ENCODE measurements at regions of chr20 and their contacts with region 1.

Region 1: DNA sequence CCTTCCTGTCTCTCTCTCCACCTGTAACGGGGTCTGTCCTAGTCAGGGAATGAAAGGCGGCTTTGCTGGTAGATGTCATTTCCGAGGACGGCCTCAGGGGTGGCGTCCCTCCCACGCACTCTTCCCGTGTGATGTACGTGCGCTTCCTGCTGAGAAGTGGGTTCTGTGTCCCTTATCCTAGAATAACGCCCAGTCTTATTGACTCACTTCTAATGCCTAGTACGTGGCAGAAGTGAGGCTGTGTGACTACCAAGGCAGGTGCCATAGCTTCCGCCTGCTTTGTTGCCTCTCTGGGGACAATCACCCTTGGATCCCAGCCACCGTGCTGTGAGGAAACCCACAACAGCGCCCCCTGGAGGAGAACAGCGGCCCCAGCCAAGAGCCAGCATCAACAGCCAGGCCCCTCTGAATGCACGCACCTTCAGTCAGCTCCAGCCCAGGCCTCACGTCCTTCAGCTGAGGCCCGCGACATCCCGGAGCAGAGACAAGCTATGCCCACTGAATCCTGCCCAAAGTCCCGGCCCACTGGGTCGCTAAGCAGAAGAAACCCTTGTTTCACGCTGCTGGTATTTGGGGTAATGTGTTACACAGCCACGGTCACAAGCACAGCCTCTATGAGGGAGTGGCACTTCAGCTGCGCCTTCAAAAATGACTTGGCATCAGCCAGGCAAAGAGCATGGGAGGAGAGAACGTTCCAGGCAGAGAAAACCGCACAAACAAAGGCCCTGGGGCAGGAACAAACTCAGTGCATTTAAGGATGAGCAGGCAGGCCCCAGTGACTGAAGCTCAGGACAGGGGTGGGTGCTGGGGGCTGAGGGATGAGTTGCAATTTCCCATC is 224.2 kb downstream of the NFATC2 start:
- DNase-seq: peak in 1 of 5 donors; percentile 12
- ATAC-seq: peak in 1 of 4 donors; percentile 29
- H3K4me3 ChIP-seq: no peak overlapping the region
- H3K27ac ChIP-seq: no peak overlapping the region
- H3K4me1 ChIP-seq: no peaks in the 10 kb centered on the region
- H3K27me3 ChIP-seq: peaks cover 0 to 3% (median 0%) of the 10 kb centered on the region in 9 donors
- CTCF ChIP-seq: peak in 11 of 12 donors; percentile 15 to 49 (median 33)
- POLR2A ChIP-seq: no peak

Region 2: DNA sequence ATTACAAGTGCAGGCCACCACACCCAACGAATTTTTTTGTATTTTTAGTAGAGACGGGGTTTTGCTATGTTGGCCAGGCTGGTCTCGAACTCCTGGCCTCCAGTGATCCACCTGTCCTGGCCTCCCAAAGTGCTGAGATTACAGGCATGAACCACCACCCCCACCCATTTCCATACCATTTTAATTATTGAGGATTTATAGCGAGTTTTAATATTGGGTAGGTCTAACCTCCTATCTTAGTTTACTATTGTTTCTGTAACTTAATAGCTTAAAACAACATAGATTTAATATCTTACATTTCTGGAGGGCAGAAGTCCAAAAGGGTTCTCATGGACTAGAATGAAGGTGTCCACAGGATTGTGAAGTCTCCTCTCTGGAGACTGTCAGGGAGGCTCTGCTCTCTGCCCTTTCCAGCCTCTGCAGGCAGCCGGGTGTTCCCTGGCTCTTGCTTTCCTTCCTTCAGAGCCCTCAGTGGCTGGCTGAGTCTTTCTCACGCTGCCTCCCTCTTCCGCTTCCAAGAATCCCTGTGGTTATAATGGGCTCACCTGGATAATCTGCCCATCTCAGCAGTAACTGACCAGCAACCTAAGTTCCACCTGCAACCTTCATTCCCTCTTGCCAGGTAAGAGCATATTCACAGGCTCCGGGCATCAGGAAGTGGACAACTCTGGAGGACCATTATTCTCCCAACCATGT is 542.0 kb before region 1 on chr20:
- intact Hi-C with region 1: no loop called
- DNase-seq: peak in 1 of 5 donors; percentile 2
- ATAC-seq: no peak
- H3K4me3 ChIP-seq: no peak overlapping the region
- H3K27ac ChIP-seq: no peak overlapping the region
- H3K4me1 ChIP-seq: no peaks in the 10 kb centered on the region
- H3K27me3 ChIP-seq: peaks cover 0 to 4% (median 0%) of the 10 kb centered on the region in 9 donors
- CTCF ChIP-seq: no peak
- POLR2A ChIP-seq: no peak

Region 3: GRCh38 chr20:50799890-50800655 is 518.2 kb before region 1 on chr20:
- intact Hi-C with region 1: loop called in 3 of 10 experiments (anchors 10 kb)
- DNase-seq: no peak
- ATAC-seq: no peak
- H3K4me3 ChIP-seq: no peak overlapping the region
- H3K27ac ChIP-seq: no peak overlapping the region
- H3K4me1 ChIP-seq: peaks cover 0 to 10% (median 0%) of the 10 kb centered on the region in 12 donors
- H3K27me3 ChIP-seq: peaks cover 0 to 6% (median 0%) of the 10 kb centered on the region in 9 donors
- CTCF ChIP-seq: no peak
- POLR2A ChIP-seq: no peak

Region 4: DNA sequence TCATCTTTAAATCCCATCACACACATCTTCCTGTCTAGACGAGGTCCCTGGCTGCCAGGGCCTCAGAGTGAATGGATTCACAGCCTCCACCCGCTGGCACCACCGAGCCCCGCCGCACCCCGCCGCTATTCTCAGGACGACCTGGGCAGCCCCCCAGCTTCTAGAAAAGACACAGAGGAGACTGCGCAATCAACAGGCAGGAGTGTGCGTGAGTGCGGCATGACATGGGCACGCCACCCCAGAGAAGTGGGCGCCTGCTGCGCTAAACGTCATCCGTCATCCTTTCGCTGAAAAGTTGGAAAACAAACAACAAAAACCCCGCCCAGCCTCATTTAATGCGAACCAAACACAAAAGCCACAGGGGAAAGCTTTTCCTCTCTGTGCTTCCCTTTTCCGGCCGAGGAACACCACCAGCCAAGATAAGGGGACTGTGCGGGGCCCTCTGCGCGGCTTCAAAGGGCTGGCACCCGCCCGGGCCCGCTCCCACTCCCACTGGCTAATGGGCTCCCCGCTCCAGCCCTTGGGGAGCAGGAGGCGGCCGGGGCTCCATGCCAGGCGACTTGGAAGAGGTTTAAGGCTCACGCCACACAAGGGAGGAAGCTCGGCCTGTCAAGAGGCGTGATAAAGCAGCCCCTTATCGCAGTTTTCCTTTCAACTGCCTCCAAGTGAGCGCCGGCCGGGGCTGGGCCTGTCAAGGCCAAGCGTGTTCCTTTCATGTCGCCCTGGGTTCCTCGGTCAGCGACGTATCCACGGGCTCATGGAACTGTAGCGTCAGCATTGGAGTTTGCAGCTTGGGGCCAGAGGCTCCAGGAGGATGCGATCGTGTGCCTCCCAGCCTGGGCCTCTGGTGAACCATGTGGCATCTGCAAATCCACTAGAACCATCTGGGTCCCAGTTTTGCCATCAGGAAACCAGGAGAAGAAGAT is 174.2 kb after region 1 on chr20:
- intact Hi-C with region 1: no loop called
- DNase-seq: peak; percentile 70 to 85 (median 83)
- ATAC-seq: peak; percentile 75 to 93 (median 92)
- H3K4me3 ChIP-seq: peak overlapping the region in 11 of 12 donors; percentile 11 to 53 (median 40)
- H3K27ac ChIP-seq: peak overlapping the region in 8 of 12 donors; percentile 11 to 62 (median 50)
- H3K4me1 ChIP-seq: peaks cover 0 to 51% (median 24%) of the 10 kb centered on the region in 12 donors
- H3K27me3 ChIP-seq: no peaks in the 10 kb centered on the region
- CTCF ChIP-seq: no peak
- POLR2A ChIP-seq: peak in 1 of 2 donors; percentile 12